ENCODE measurements at regions of chr17 and their contacts with region 1.

Region 1: DNA sequence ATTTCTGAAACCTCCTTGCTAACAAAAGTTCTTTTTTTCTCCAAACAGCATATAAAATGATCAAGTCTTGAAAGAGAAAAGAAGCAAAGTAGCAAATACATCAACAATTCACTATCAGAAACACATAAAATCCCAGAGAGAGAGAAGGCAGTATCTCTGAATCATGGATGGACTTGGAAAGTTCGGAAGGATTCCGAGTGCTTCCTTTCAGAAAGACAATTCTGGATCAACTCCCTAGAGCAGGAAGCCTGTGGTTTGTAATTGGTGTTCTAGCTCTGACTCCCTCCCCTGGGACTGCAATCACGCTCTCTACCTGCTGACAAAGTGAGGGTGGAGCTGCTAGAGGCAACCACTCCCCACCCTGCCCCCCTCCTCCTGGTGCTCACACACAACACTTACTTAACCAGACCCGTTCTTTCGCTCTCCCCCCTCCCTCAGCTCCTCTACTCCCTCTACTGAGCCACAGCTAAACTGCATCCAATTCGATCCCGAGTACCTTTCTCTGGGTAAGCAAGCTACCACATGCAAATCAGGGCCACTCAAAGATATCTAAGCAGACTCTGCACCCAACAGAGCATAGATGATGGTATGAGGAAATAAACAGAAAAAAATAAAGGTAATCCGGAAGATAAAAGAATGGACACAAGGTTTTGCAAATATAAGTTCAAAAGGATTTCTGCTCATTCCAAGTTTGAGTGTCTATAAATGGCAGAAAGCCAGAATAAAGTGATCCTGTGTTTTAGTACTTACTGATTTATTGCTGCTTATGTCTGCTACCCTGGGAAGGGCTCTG is at the start of gene RNF43:
- DNase-seq: peak; percentile 94
- ATAC-seq: peak; percentile 99
- H3K4me3 Mint-ChIP-seq: peak within 1 kb of the TSS; percentile 9
- H3K27ac Mint-ChIP-seq: peak within 1 kb of the TSS; percentile 38
- H3K4me1 Mint-ChIP-seq: peaks cover 32% of the 10 kb centered on the region
- H3K27me3 Mint-ChIP-seq: no peaks in the 10 kb centered on the region
- total RNA-seq, gene RNF43: 0.71 to 1.0 TPM

Region 2: DNA sequence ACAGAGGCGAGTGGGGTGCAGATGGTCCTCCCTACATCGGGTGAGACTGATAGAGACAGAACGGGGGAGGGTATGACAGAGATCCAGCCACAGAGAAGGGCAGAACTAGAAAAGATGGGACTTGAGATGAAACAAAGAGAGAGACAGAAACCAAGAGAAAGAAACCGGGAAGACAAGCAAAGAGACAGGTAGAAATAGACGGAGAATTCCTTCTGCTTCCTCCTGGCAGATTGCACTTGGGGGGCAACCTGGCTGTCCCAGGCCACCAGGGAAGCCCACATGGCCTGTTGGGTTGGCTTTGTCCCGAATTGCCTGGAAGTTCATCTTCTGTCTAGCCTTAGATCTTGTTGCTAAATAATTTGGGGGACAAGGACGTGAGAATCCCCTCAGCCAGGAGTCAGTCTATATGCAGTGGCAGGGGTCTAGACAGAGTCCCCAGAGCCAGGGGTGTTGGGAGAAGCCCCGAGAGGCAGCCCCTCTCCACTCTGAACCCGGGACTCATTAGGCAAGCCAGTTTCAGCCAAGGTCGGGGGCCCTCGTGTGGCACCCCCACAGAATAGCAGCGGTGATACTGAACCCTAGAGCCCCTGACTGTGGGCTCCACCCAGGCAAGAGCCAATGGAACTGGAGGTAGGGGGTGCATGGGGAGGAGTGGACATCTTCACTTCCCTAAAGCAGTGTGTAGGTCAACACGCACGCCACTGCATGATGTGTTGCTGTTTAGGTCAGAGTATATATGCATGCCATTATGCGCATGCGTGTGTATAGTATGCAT is 88.3 kb before region 1 on chr17:
- CTCF ChIA-PET with region 1: interaction called, 7 read pairs
- POLR2A ChIA-PET with region 1: interaction called, 15 read pairs
- intact Hi-C with region 1: loop called (anchors 1 kb)
- DNase-seq: peak; percentile 93
- ATAC-seq: peak; percentile 43
- H3K4me3 Mint-ChIP-seq: peak overlapping the region; percentile 100
- H3K27ac Mint-ChIP-seq: peak overlapping the region; percentile 93
- H3K4me1 Mint-ChIP-seq: peaks cover 39% of the 10 kb centered on the region
- H3K27me3 Mint-ChIP-seq: peaks cover 2% of the 10 kb centered on the region

Region 3: GRCh38 chr17:58344047-58344790 is 73.3 kb before region 1 on chr17:
- CTCF ChIA-PET with region 1: interaction called, 13 read pairs
- POLR2A ChIA-PET with region 1: interaction called, 8 read pairs
- intact Hi-C with region 1: loop called in 1 of 2 experiments (anchors 2 kb)
- DNase-seq: peak; percentile 95
- ATAC-seq: peak; percentile 76
- H3K4me3 Mint-ChIP-seq: peak overlapping the region; percentile 100
- H3K27ac Mint-ChIP-seq: peak overlapping the region; percentile 99
- H3K4me1 Mint-ChIP-seq: peaks cover 74% of the 10 kb centered on the region
- H3K27me3 Mint-ChIP-seq: no peaks in the 10 kb centered on the region

Region 4: DNA sequence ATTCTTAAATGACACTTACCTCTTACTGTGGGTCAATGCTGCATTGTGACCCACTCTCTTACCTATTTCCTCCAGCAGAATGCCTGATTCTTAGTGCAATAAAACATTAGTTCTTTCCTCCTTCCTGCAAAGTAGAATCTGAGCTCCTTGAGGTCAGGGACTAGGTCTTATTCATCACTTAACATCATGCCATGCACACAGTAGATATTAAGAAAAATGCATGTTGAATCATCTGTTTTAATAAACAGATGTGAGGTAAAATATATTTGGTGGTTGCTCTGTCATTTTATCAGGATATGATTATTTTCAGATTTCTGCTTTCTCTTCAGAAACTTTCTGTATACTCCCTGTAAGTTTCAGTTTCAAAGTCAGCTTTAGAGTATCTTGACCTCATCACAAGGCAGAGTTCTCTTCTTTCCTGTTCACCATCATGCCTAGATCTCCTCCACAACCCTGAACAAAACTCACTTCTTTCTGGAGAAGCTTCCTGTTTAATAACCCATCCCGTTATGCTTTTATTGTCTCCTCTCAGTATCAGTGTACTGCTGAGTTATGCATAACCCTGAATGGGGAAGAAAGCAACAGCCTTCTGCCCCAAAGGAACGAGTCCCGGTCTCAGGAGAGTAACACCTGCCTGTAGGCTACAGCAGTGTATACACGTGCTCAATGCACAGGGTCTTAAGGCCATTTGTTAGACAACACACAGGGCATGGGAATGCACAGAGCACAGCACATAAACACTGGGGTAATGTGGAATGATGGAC is 35.2 kb before region 1 on chr17:
- CTCF ChIA-PET with region 1: interaction called, 8 read pairs
- POLR2A ChIA-PET with region 1: interaction called, 4 read pairs
- intact Hi-C with region 1: loop called in 1 of 2 experiments (anchors 1 kb)
- DNase-seq: no peak
- ATAC-seq: peak; percentile 90
- H3K4me3 Mint-ChIP-seq: no peak overlapping the region
- H3K27ac Mint-ChIP-seq: peak overlapping the region; percentile 44
- H3K4me1 Mint-ChIP-seq: peaks cover 36% of the 10 kb centered on the region
- H3K27me3 Mint-ChIP-seq: no peaks in the 10 kb centered on the region

Region 5: DNA sequence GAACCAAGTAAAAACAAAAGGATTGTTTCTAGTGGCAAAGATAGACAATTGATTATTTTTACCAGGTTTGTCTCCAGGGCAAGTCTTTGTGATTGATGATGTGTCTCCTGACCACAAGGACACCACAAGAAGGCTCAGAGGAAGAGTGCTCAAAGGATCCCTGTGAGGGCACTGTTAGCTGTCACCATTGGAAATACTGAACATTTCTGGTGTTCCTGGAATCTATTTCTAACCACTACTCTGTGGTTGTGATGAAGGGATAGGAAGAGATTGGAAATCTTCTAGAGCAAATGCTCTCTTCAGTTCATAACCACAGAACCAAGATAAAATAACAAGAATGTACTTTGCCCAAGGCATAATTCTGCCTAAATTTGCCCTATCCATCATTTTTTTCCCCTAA is 15.4 kb before region 1 on chr17:
- CTCF ChIA-PET with region 1: interaction called, 11 read pairs
- POLR2A ChIA-PET with region 1: no interaction called
- intact Hi-C with region 1: no loop called
- DNase-seq: peak; percentile 13
- ATAC-seq: peak; percentile 57
- H3K4me3 Mint-ChIP-seq: no peak overlapping the region
- H3K27ac Mint-ChIP-seq: peak overlapping the region; percentile 2
- H3K4me1 Mint-ChIP-seq: peaks cover 13% of the 10 kb centered on the region
- H3K27me3 Mint-ChIP-seq: no peaks in the 10 kb centered on the region

Measured in activated CD4-positive, alpha-beta T cell treated with anti-CD3 and anti-CD28 coated beads for 36 hours (primary cell).